H1 (cell line): ENCODE measurements at regions of chr1 and their contacts with region 1.

Region 1: GRCh38 chr1:205396967-205397616 is 24.8 kb downstream of the LEMD1 start:
- DNase-seq: no peak
- H3K4me3 ChIP-seq: no peak overlapping the region
- H3K27ac ChIP-seq: no peak overlapping the region
- H3K4me1 ChIP-seq: no peaks in the 10 kb centered on the region
- H3K27me3 ChIP-seq: no peaks in the 10 kb centered on the region
- CTCF ChIP-seq: peak; percentile 27 to 93 (median 90)
- EP300 ChIP-seq: 0 out of 3 replicates have a peak, but pooled peaks of 1 of the 2 experiments have one; percentile 20
- POLR2A ChIP-seq: no peak
- RAD21 ChIP-seq: peak; percentile 99 to 100

Region 2: DNA sequence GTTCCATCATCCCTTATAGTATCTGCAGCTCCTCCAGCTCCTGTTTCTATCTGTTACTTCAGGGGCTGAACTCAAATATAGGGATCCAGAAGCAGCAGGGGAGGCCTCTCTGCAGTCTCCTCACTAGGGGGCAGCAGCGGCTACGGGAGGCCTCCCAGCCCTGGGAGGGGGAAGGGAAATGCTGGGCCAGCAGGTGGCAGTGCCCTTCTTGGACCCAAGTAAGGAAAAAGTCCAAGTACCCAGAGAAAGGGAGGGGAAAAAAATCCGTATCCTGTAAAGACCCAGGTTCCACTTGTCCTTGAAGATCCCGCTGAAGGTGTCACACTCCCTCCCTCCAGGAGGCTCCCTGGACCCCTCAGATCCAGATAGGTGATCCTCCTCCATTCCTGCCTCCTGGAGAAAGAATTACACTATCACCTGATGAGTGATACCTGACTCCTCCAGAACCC is 61.4 kb before region 1 on chr1:
- CTCF ChIA-PET with region 1: interaction called, 23 read pairs
- POLR2A ChIA-PET with region 1: no interaction called
- DNase-seq: peak; percentile 78 to 91
- H3K4me3 ChIP-seq: no peak overlapping the region
- H3K27ac ChIP-seq: no peak overlapping the region
- H3K4me1 ChIP-seq: peaks cover 0 to 3% (median under 1%) of the 10 kb centered on the region in 4 experiments; a peak in 4 of 7 replicates
- H3K27me3 ChIP-seq: no peaks in the 10 kb centered on the region; a peak in 3 of 7 replicates
- CTCF ChIP-seq: peak; percentile 93 to 99 (median 94)
- EP300 ChIP-seq: no peak
- POLR2A ChIP-seq: no peak
- RAD21 ChIP-seq: peak; percentile 78 to 89

Region 3: DNA sequence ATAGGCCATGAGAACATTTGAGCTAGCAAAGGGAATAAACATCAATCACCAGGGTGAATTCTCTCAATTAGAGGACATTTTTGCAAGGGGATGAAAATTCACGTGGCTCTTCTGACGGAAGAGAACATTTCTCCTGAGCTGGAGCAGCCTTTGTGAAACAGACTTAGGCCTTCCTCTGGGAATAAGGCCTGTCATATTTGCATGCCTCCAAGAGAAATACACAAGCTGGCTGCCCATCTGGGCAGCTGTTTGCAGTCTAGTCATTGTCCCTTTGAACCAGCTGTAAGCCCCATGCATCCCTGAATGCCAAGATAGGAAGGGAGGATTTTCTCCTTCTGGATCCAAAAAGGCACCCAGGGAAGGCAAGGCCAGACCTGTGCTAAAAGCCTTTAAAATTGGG is 19.2 kb after region 1 on chr1:
- CTCF ChIA-PET with region 1: interaction called, 15 read pairs
- POLR2A ChIA-PET with region 1: no interaction called
- DNase-seq: no peak
- H3K4me3 ChIP-seq: no peak overlapping the region
- H3K27ac ChIP-seq: no peak overlapping the region
- H3K4me1 ChIP-seq: no peaks in the 10 kb centered on the region
- H3K27me3 ChIP-seq: no peaks in the 10 kb centered on the region
- CTCF ChIP-seq: no peak
- EP300 ChIP-seq: no peak
- POLR2A ChIP-seq: no peak
- RAD21 ChIP-seq: no peak

Region 4: GRCh38 chr1:205430696-205431305 is 33.7 kb after region 1 on chr1:
- CTCF ChIA-PET with region 1: interaction called, 42 read pairs
- POLR2A ChIA-PET with region 1: no interaction called
- DNase-seq: peak in 1 of 2 experiments; percentile 91
- H3K4me3 ChIP-seq: peak overlapping the region; percentile 25 to 73 (median 44)
- H3K27ac ChIP-seq: no peak overlapping the region
- H3K4me1 ChIP-seq: peaks cover 2 to 5% (median 3%) of the 10 kb centered on the region in 4 experiments; a peak in 4 of 7 replicates
- H3K27me3 ChIP-seq: peaks cover 0 to 20% (median 11%) of the 10 kb centered on the region in 4 experiments; a peak in 6 of 7 replicates
- CTCF ChIP-seq: peak; percentile 85 to 97 (median 96)
- EP300 ChIP-seq: 0 out of 3 replicates have a peak, but pooled peaks of 1 of the 2 experiments have one; percentile 4
- POLR2A ChIP-seq: no peak; a peak in 1 of 3 replicates
- RAD21 ChIP-seq: peak; percentile 69 to 82

Region 5: GRCh38 chr1:205458777-205459566 is 61.9 kb after region 1 on chr1:
- CTCF ChIA-PET with region 1: interaction called, 12 read pairs
- POLR2A ChIA-PET with region 1: interaction called, 3 read pairs
- DNase-seq: peak in 1 of 2 experiments; percentile 80
- H3K4me3 ChIP-seq: no peak overlapping the region
- H3K27ac ChIP-seq: no peak overlapping the region
- H3K4me1 ChIP-seq: peaks cover 7 to 23% (median 13%) of the 10 kb centered on the region in 4 experiments
- H3K27me3 ChIP-seq: peaks cover 0 to 2% (median 0%) of the 10 kb centered on the region in 4 experiments; a peak in 2 of 7 replicates
- CTCF ChIP-seq: no peak
- EP300 ChIP-seq: no peak
- POLR2A ChIP-seq: no peak
- RAD21 ChIP-seq: peak in 1 of 2 experiments; percentile 32; a peak in 1 of 4 replicates

Region 6: GRCh38 chr1:205493241-205494085 is 96.4 kb after region 1 on chr1:
- CTCF ChIA-PET with region 1: interaction called, 93 read pairs
- POLR2A ChIA-PET with region 1: interaction called, 3 read pairs
- DNase-seq: no peak
- H3K4me3 ChIP-seq: no peak overlapping the region
- H3K27ac ChIP-seq: no peak overlapping the region
- H3K4me1 ChIP-seq: peaks cover 10 to 23% (median 16%) of the 10 kb centered on the region in 4 experiments
- H3K27me3 ChIP-seq: no peaks in the 10 kb centered on the region
- CTCF ChIP-seq: no peak
- EP300 ChIP-seq: no peak
- POLR2A ChIP-seq: no peak
- RAD21 ChIP-seq: no peak

Region 7: DNA sequence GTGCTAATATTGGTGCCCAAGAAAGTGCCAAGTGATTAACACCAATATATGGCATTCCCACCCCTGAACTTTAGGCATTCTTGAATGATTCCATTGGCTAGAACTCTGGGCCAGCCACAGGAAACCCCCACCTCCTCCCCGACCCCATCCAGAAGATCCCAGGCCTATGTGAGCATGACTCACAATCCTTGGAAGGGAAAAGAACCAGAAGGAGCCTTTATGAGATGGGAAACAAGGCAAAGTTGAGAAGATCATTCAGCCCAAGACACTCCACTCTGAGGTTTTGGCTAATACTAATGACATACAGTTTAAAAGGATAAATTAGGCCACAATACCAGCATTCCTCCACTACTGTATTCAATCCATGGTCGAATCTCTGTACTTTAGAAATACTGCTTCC is 212.9 kb after region 1 on chr1:
- CTCF ChIA-PET with region 1: no interaction called
- POLR2A ChIA-PET with region 1: no interaction called
- DNase-seq: no peak
- H3K4me3 ChIP-seq: no peak overlapping the region
- H3K27ac ChIP-seq: no peak overlapping the region
- H3K4me1 ChIP-seq: no peaks in the 10 kb centered on the region
- H3K27me3 ChIP-seq: peaks cover 0 to 2% (median 0%) of the 10 kb centered on the region in 4 experiments; a peak in 1 of 7 replicates
- CTCF ChIP-seq: no peak
- EP300 ChIP-seq: no peak
- POLR2A ChIP-seq: no peak
- RAD21 ChIP-seq: no peak